A673 (cell line): ENCODE measurements at regions of chr1 and their contacts with region 1.

Region 1: DNA sequence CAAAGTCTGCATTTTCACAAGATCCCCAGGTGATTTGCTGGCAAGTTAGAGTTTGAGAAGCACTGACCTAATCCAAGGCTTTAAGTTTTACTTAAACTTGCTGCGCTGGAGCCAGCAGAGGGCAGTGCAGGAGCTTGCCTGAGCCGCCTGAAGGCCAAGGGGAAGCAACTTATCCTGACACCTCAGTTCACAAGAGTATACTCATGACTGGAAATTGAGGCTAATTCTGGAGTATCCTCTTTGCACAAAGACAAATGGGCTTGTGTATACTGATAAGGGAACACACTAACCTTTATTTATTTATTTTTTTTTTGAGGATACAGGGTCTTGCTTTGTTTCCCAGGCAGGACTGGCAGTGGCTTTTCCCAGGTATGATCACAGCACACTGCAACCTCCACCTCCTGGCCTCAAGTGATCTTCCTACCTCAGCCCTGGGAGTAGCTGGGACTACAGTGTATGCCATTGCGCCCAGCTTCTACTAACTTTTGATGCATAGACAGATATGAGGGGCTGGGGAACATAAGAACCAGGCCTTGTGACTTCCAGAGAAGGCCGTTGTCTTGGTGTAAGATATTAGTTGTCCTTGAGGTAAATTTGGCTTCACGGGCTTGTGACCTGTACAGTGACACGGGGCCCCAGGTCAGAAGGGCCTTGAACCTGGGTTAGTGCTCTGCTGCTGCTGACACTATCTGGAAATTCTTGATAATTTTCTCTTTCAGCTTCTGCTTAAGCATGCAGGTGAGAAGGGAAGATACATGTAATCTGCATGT is 29.0 kb upstream of the SLAMF1 start:
- DNase-seq: peak; percentile 70
- H3K4me3 ChIP-seq: no peak overlapping the region
- H3K27ac ChIP-seq: no peak overlapping the region
- H3K4me1 ChIP-seq: no peaks in the 10 kb centered on the region
- H3K27me3 ChIP-seq: peaks cover 12% of the 10 kb centered on the region
- CTCF ChIP-seq: peak; percentile 93

Region 2: GRCh38 chr1:160428655-160429054 is 247.2 kb before region 1 on chr1:
- CTCF ChIA-PET with region 1: interaction called, 4 read pairs
- POLR2A ChIA-PET with region 1: no interaction called
- intact Hi-C with region 1: loop called (anchors 2 kb)
- DNase-seq: peak; percentile 68
- H3K4me3 ChIP-seq: no peak overlapping the region
- H3K27ac ChIP-seq: no peak overlapping the region
- H3K4me1 ChIP-seq: no peaks in the 10 kb centered on the region
- H3K27me3 ChIP-seq: no peaks in the 10 kb centered on the region
- CTCF ChIP-seq: peak; percentile 69

Region 3: GRCh38 chr1:160884579-160884978 is 208.8 kb after region 1 on chr1:
- CTCF ChIA-PET with region 1: no interaction called
- POLR2A ChIA-PET with region 1: no interaction called
- intact Hi-C with region 1: no loop called
- DNase-seq: peak; percentile 35
- H3K4me3 ChIP-seq: no peak overlapping the region
- H3K27ac ChIP-seq: no peak overlapping the region
- H3K4me1 ChIP-seq: no peaks in the 10 kb centered on the region
- H3K27me3 ChIP-seq: no peaks in the 10 kb centered on the region
- CTCF ChIP-seq: peak; percentile 54

Region 4: DNA sequence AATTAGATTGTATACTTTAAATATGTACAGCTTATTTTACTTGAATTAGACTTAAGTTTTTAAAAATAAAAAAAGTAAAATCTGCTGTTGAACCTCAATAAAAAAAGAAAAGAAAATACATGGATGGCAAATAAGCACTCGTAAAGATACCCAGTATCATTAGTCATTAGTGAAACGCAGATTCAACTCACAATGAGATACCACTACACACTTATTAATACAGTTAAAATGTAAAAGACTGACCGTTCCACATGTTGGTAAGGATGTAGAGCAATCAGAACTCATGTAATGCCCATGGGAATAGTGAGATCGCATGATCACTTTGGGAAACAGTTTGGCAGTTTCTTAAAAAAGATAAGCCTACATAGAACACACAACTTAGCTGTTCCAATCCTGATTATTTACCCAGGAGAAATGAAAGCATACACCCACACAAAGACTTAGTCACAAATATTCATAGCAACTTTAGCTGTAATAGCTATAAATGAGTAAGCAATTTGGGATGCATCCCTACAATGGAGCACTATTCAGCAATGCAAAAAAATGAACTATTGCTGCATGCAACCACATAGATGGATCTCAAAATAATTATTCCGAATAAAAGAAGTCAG is 1728.8 kb after region 1 on chr1:
- CTCF ChIA-PET with region 1: no interaction called
- POLR2A ChIA-PET with region 1: no interaction called
- intact Hi-C with region 1: no loop called
- DNase-seq: peak; percentile 47
- H3K4me3 ChIP-seq: no peak overlapping the region
- H3K27ac ChIP-seq: no peak overlapping the region
- H3K4me1 ChIP-seq: peaks cover 17% of the 10 kb centered on the region
- H3K27me3 ChIP-seq: no peaks in the 10 kb centered on the region
- CTCF ChIP-seq: no peak